Activated CD8-positive, alpha-beta memory T cell treated with anti-CD3 and anti-CD28 coated beads, Interleukin-2, amount 10 ng/mL, durations not matched to agents 7 days and 5 days (primary cell): ENCODE measurements at regions of chr7 and their contacts with region 1.

Region 1: DNA sequence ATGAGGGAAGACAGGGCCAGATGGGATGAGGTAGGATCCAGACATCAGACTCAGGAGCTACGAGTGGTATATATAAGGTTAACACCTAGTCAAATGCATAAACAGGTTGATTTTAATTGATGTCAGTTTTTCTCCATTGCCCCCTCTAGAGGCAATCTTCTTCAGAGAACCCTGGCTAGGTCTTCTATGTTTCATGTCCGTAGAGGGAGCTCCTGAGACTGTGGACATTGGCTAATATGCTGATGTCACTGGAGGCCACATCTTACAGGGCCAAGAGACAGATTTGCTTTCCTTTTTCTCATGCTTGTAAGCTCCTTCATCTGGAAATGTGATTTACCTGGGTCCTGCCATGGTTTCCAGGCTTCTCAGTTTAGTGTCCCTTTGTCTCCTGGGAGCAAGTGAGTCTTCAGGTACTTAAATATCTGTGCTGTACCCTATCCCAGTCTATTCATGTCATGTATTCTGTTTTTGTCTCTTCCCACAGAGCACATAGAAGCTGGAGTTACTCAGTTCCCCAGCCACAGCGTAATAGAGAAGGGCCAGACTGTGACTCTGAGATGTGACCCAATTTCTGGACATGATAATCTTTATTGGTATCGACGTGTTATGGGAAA is 161.6 kb upstream of the PRSS1 start:
- DNase-seq: no peak
- ATAC-seq: peak; percentile 88
- H3K4me3 Mint-ChIP-seq: no peak overlapping the region
- H3K27ac Mint-ChIP-seq: no peak overlapping the region
- H3K4me1 Mint-ChIP-seq: peaks cover 4% of the 10 kb centered on the region
- H3K27me3 Mint-ChIP-seq: no peaks in the 10 kb centered on the region

Region 2: DNA sequence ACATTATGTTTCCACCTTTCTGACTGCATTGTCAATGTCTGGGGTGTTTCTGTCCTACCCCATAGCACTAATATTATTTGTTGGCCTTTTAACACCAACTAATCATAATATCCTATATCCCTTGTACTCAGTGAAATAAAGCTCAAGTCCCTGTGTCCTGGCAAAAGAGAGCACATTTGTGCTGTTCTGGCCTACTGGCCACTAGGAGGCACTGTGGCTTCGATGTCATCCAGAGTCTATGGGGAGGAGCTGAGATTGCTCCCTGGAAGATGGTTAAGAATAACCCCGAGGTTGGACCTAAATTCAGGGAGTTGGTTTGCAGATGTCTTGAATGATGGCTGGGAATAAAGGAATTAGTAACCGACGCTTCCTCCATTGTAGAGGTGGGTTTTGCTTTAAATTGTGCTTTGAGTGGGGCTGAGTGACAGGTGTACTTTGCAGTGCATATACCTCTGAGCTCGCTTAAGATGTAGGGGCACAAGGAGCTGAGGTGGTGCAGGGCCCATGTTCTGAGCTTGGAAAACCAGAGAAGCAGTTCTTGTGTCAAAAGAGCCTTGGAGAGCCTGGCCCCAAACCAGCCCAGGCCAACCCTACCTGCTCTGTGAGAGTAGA is 29.6 kb before region 1 on chr7:
- CTCF ChIA-PET with region 1: interaction called, 19 read pairs
- DNase-seq: peak; percentile 54
- ATAC-seq: peak; percentile 79
- H3K4me3 Mint-ChIP-seq: peak overlapping the region; percentile 41
- H3K27ac Mint-ChIP-seq: peak overlapping the region; percentile 28
- H3K4me1 Mint-ChIP-seq: peaks cover 24% of the 10 kb centered on the region
- H3K27me3 Mint-ChIP-seq: peaks cover 10% of the 10 kb centered on the region

Region 3: GRCh38 chr7:142760071-142760642 is 172.5 kb after region 1 on chr7:
- CTCF ChIA-PET with region 1: no interaction called
- DNase-seq: no peak
- ATAC-seq: no peak
- H3K4me3 Mint-ChIP-seq: no peak overlapping the region
- H3K27ac Mint-ChIP-seq: no peak overlapping the region
- H3K4me1 Mint-ChIP-seq: no peaks in the 10 kb centered on the region
- H3K27me3 Mint-ChIP-seq: peaks cover 2% of the 10 kb centered on the region